HEK293 (cell line): ENCODE measurements at regions of chr17 and their contacts with region 1.

Region 1: GRCh38 chr17:19513897-19514488 is 19.7 kb upstream of the SLC47A1 start:
- H3K4me3 ChIP-seq: no peak overlapping the region
- H3K27ac ChIP-seq: no peak overlapping the region
- H3K4me1 ChIP-seq: no peaks in the 10 kb centered on the region
- CTCF ChIP-seq: peak; percentile 82

Region 2: GRCh38 chr17:19533718-19534561 is 19.9 kb after region 1 on chr17 and contains the start of gene SLC47A1:
- CTCF ChIA-PET with region 1: interaction called, 17 read pairs
- POLR2A ChIA-PET with region 1: no interaction called
- H3K4me3 ChIP-seq: peak within 1 kb of the TSS; percentile 63
- H3K27ac ChIP-seq: peak within 1 kb of the TSS; percentile 58; the same call in 1 of the 2 replicates
- H3K4me1 ChIP-seq: 0 out of 2 replicates have a peak, but pooled peaks cover 2% of the 10 kb centered on the region
- CTCF ChIP-seq: peak; percentile 9; the same call in 1 of the 2 replicates

Region 3: GRCh38 chr17:19596869-19597268 is 82.9 kb after region 1 on chr17:
- CTCF ChIA-PET with region 1: no interaction called
- POLR2A ChIA-PET with region 1: no interaction called
- H3K4me3 ChIP-seq: no peak overlapping the region
- H3K27ac ChIP-seq: no peak overlapping the region
- H3K4me1 ChIP-seq: no peaks in the 10 kb centered on the region
- CTCF ChIP-seq: no peak

Region 4: GRCh38 chr17:19621697-19622096 is 107.7 kb after region 1 on chr17:
- CTCF ChIA-PET with region 1: no interaction called
- POLR2A ChIA-PET with region 1: no interaction called
- H3K4me3 ChIP-seq: no peak overlapping the region
- H3K27ac ChIP-seq: no peak overlapping the region
- H3K4me1 ChIP-seq: no peaks in the 10 kb centered on the region
- CTCF ChIP-seq: no peak

Region 5: GRCh38 chr17:19753049-19753444 is 239.1 kb after region 1 on chr17:
- CTCF ChIA-PET with region 1: interaction called, 14 read pairs
- POLR2A ChIA-PET with region 1: no interaction called
- H3K4me3 ChIP-seq: no peak overlapping the region
- H3K27ac ChIP-seq: no peak overlapping the region
- H3K4me1 ChIP-seq: no peaks in the 10 kb centered on the region
- CTCF ChIP-seq: no peak

Region 6: GRCh38 chr17:20028443-20028842 is 514.5 kb after region 1 on chr17:
- CTCF ChIA-PET with region 1: no interaction called
- POLR2A ChIA-PET with region 1: no interaction called
- H3K4me3 ChIP-seq: no peak overlapping the region
- H3K27ac ChIP-seq: no peak overlapping the region
- H3K4me1 ChIP-seq: no peaks in the 10 kb centered on the region
- CTCF ChIP-seq: no peak